IMR-90 (cell line): ENCODE measurements at regions of chr22 and their contacts with region 1.

Region 1: GRCh38 chr22:20013382-20013871 is 3.2 kb downstream of the ARVCF start:
- DNase-seq: peak; percentile 47
- ATAC-seq: peak; percentile 64
- H3K4me3 ChIP-seq: no peak overlapping the region
- H3K27ac ChIP-seq: no peak overlapping the region
- H3K4me1 ChIP-seq: no peaks in the 10 kb centered on the region
- H3K27me3 ChIP-seq: peaks cover 32% of the 10 kb centered on the region
- CTCF ChIP-seq: peak; percentile 82
- POLR2A ChIP-seq: no peak
- RAD21 ChIP-seq: peak; percentile 89

Region 2: DNA sequence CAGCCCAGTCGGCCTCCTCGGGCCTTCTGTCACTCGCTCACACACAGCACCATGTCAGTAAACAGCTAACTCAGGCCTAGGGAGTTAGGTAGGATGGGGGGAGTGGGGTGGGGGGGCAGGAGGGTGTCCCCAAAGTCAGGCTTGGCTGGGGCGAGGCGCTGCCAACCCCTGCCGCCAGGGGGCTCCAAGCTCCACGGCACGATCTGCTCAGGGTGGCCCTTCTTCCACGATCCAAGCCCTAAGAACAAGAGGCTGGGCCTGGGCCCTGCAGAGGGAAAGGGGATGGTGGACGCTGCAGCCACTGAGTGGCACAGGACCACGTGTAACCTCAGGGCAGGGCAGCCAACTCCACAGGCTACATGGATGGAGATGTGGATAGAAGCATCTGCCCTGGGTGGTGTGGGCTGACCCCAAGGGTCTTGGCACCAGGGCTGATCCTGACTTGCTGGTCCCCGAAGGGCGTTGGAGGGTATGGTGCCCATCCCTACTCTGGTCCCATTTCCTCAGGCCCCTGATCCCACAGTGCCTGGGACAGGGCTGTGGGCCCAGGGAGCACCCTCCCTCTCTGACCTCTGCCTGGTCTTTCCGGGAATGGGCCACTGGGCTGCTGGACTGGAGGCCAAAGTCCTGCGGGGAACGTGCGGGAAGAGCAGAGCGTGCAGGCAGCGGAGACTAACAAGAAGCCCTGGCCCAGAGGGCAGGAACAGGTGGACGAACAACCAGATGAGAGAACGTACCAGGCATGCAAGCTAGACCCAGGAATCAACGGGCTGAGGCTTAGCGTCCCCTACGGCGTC is 42.8 kb before region 1 on chr22:
- CTCF ChIA-PET with region 1: interaction called, 8 read pairs
- POLR2A ChIA-PET with region 1: no interaction called
- dilution Hi-C with region 1: no loop called
- in situ Hi-C with region 1: loop called (anchors 5 kb)
- intact Hi-C with region 1: loop called (anchors 1 kb)
- DNase-seq: peak; percentile 51
- ATAC-seq: peak; percentile 83
- H3K4me3 ChIP-seq: no peak overlapping the region
- H3K27ac ChIP-seq: no peak overlapping the region
- H3K4me1 ChIP-seq: 0 out of 2 replicates have a peak, but pooled peaks cover 1% of the 10 kb centered on the region
- H3K27me3 ChIP-seq: no peaks in the 10 kb centered on the region
- CTCF ChIP-seq: peak; percentile 83
- POLR2A ChIP-seq: no peak
- RAD21 ChIP-seq: peak; percentile 88

Region 3: GRCh38 chr22:20093418-20094196 is 80.2 kb after region 1 on chr22:
- CTCF ChIA-PET with region 1: no interaction called
- POLR2A ChIA-PET with region 1: no interaction called
- dilution Hi-C with region 1: no loop called
- in situ Hi-C with region 1: no loop called
- intact Hi-C with region 1: no loop called
- DNase-seq: no peak
- ATAC-seq: no peak
- H3K4me3 ChIP-seq: no peak overlapping the region
- H3K27ac ChIP-seq: no peak overlapping the region
- H3K4me1 ChIP-seq: peaks cover 4% of the 10 kb centered on the region; the same call in 1 of the 2 replicates
- H3K27me3 ChIP-seq: no peaks in the 10 kb centered on the region
- CTCF ChIP-seq: no peak
- POLR2A ChIP-seq: no peak
- RAD21 ChIP-seq: no peak